ENCODE measurements at regions of chr2 and their contacts with region 1.

Region 1: GRCh38 chr2:177296040-177296439 is 31.5 kb upstream of the NFE2L2 start:
- DNase-seq: no peak
- H3K4me3 Mint-ChIP-seq: no peak overlapping the region
- H3K27ac Mint-ChIP-seq: peak overlapping the region; percentile 1
- H3K4me1 Mint-ChIP-seq: peaks cover 47% of the 10 kb centered on the region
- H3K27me3 Mint-ChIP-seq: peaks cover 2% of the 10 kb centered on the region

Region 2: DNA sequence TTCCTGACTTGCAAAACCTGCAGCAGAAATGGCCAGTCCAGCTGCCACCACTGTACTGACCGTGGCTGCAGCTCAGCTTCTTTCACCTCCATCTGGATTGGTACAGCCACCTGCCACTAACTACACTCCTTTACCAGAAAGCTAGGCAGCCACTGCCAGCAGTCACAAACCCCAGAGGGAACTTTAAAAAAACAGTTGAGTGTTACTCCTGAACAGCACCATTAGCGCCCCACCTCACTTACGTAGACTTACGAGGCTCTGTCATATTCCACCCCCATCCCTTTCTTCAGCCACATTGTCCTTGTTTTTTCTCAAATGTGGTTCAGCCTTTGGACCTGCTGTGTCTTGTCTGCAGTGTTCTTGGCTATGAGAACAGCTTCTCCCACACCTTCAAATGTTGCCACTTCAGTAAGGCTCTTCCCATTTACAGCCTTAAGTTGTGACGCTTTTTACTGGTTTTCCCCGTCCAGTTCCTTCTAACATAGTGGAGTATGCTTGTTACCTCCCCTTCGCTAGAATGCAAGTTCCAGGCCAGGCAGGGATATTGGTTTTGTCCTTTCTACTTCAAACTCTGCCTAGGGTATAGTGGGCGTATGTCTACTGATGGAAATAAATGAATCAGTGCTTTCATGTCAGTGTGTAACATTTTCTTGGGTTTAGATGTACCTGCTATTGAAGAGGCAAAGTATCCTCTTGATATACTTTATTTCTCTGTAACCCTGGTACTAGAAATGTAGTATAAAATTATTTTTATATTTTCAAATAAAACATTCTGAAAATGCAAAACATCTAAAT is 66.4 kb before region 1 on chr2:
- intact Hi-C with region 1: loop called (anchors 5 kb)
- DNase-seq: no peak
- H3K4me3 Mint-ChIP-seq: no peak overlapping the region
- H3K27ac Mint-ChIP-seq: peak overlapping the region; percentile 74
- H3K4me1 Mint-ChIP-seq: peaks cover 45% of the 10 kb centered on the region
- H3K27me3 Mint-ChIP-seq: no peaks in the 10 kb centered on the region

Region 3: DNA sequence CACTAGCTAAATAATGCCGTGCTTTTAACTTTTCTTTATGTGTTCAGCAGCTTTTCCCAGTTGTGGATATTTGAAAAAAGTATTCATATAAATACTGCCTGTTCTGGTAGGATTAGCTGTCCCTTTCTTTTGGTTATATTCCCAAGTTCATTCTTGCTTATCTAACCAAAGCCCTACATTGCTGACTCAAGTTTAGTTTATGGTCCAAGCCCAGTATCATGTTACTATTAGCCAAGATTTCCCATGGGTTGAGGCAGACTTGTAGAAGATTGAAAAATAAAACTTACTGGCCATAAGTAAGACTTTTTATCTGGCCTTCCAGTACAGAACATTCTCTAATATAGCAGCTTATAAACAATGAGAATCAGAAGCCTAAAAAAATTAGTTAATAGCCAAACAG is 18.2 kb after region 1 on chr2:
- intact Hi-C with region 1: loop called (anchors 2 kb)
- DNase-seq: no peak
- H3K4me3 Mint-ChIP-seq: no peak overlapping the region
- H3K27ac Mint-ChIP-seq: no peak overlapping the region
- H3K4me1 Mint-ChIP-seq: peaks cover 9% of the 10 kb centered on the region
- H3K27me3 Mint-ChIP-seq: peaks cover 3% of the 10 kb centered on the region

Region 4: GRCh38 chr2:178128836-178129630 is 833.0 kb after region 1 on chr2:
- intact Hi-C with region 1: no loop called
- DNase-seq: no peak
- H3K4me3 Mint-ChIP-seq: no peak overlapping the region
- H3K27ac Mint-ChIP-seq: no peak overlapping the region
- H3K4me1 Mint-ChIP-seq: peaks cover 6% of the 10 kb centered on the region
- H3K27me3 Mint-ChIP-seq: no peaks in the 10 kb centered on the region